Heart left ventricle (tissue), 16 donors: ENCODE measurements at regions of chr12 and their contacts with region 1.

Region 1: GRCh38 chr12:95989504-95990123 is 6.5 kb downstream of the HAL start:
- DNase-seq: no peak
- ATAC-seq: no peak
- H3K4me3 ChIP-seq: no peak overlapping the region
- H3K27ac ChIP-seq: no peak overlapping the region
- H3K4me1 ChIP-seq: no peaks in the 10 kb centered on the region
- H3K27me3 ChIP-seq: no peaks in the 10 kb centered on the region
- CTCF ChIP-seq: no peak
- POLR2A ChIP-seq: no peak

Region 2: DNA sequence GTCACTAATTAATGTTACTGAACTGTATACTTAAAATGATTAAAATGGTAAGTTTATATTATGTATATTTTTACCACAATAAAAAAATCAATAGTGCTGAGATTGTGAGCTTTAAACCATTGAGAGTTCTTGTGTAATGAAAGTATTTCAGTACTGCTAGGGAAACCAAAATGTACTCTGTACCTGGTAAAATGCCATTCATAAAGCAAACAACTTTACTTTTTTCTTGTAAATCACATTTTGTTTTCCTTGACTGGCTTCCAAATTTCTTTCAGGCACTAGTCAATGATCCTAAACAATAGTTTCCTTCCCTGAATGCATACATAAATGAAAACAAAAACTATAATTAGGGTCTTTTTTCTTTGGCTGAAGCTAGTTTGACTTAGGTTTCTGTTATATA is 160.2 kb before region 1 on chr12:
- intact Hi-C with region 1: loop called in 4 of 10 experiments (anchors 5 to 10 kb)
- DNase-seq: no peak
- ATAC-seq: no peak
- H3K4me3 ChIP-seq: no peak overlapping the region
- H3K27ac ChIP-seq: no peak overlapping the region
- H3K4me1 ChIP-seq: no peaks in the 10 kb centered on the region
- H3K27me3 ChIP-seq: no peaks in the 10 kb centered on the region
- CTCF ChIP-seq: no peak
- POLR2A ChIP-seq: no peak